Breast epithelium (tissue), 4 donors: ENCODE measurements at regions of chr14 and their contacts with region 1.

Region 1: GRCh38 chr14:101035466-101036225 is 132.1 kb upstream of the RTL1 start:
- DNase-seq: peak in 1 of 2 donors; percentile 19
- H3K4me3 ChIP-seq: no peak overlapping the region
- H3K27ac ChIP-seq: no peak overlapping the region
- H3K4me1 ChIP-seq: no peaks in the 10 kb centered on the region
- H3K27me3 ChIP-seq: no peaks in the 10 kb centered on the region
- CTCF ChIP-seq: no peak
- POLR2A ChIP-seq: no peak

Region 2: DNA sequence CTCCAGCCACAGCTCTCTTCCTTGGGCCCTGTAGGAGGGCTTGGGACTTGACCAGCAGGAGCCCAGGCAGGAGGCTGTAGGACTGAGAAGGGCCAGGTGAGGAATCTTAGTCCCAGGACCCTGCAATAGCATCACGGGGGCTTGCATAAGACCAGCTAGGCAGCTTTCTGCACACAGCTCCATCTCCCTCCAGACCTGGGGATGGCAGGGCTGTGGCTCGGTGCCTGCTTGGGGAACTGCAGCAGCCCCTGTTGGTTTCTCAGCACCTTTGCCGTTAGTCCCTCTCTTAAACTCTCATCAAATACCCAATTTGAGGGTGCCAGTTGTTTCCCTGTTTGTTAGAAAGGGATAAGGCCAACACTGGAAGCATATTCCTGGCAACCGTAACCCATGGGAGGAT is 539.9 kb after region 1 on chr14:
- intact Hi-C with region 1: loop called (anchors 5 kb)
- DNase-seq: no peak
- H3K4me3 ChIP-seq: no peak overlapping the region
- H3K27ac ChIP-seq: no peak overlapping the region
- H3K4me1 ChIP-seq: no peaks in the 10 kb centered on the region
- H3K27me3 ChIP-seq: no peaks in the 10 kb centered on the region
- CTCF ChIP-seq: no peak
- POLR2A ChIP-seq: no peak